Caco-2 (cell line): ENCODE measurements at regions of chr10 and their contacts with region 1.

Region 1: GRCh38 chr10:30783939-30784500 is 154.5 kb upstream of the LYZL2 start:
- DNase-seq: peak; percentile 82
- H3K4me3 ChIP-seq: no peak overlapping the region
- H3K4me3 Mint-ChIP-seq: peak overlapping the region; percentile 45
- H3K27ac Mint-ChIP-seq: no peak overlapping the region
- H3K4me1 ChIP-seq: no peaks in the 10 kb centered on the region
- H3K4me1 Mint-ChIP-seq: no peaks in the 10 kb centered on the region
- H3K27me3 ChIP-seq: peaks cover 1% of the 10 kb centered on the region; the same call in 1 of the 2 replicates
- H3K27me3 Mint-ChIP-seq: peaks cover 16% of the 10 kb centered on the region
- CTCF ChIP-seq: peak; percentile 83 to 96

Region 2: GRCh38 chr10:30309401-30309800 is 474.6 kb before region 1 on chr10:
- CTCF ChIA-PET with region 1: no interaction called
- POLR2A ChIA-PET with region 1: no interaction called
- intact Hi-C with region 1: no loop called
- DNase-seq: no peak
- H3K4me3 ChIP-seq: no peak overlapping the region
- H3K4me3 Mint-ChIP-seq: no peak overlapping the region
- H3K27ac Mint-ChIP-seq: no peak overlapping the region
- H3K4me1 ChIP-seq: no peaks in the 10 kb centered on the region
- H3K4me1 Mint-ChIP-seq: no peaks in the 10 kb centered on the region
- H3K27me3 ChIP-seq: no peaks in the 10 kb centered on the region
- H3K27me3 Mint-ChIP-seq: no peaks in the 10 kb centered on the region
- CTCF ChIP-seq: no peak

Region 3: DNA sequence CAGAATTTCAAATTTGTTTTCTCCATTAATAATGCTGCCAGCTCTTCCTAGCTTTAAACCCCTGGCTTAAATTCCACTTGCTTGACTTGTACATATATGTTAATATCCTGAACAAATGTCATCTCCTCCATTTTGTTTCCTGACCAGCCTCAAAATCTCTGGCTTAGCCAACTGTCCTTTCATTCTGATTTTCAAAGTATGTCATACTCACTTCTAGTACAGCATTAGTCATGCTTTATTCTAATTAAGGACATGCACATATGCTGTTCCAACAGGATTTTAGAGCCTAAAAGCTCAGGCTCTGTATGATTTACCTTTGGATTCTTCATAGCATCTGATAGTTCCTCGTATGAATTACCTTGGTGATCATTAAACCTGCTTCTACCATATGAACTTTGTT is 89.4 kb after region 1 on chr10:
- CTCF ChIA-PET with region 1: no interaction called
- POLR2A ChIA-PET with region 1: no interaction called
- intact Hi-C with region 1: no loop called
- DNase-seq: no peak
- H3K4me3 ChIP-seq: no peak overlapping the region
- H3K4me3 Mint-ChIP-seq: no peak overlapping the region
- H3K27ac Mint-ChIP-seq: no peak overlapping the region
- H3K4me1 ChIP-seq: no peaks in the 10 kb centered on the region
- H3K4me1 Mint-ChIP-seq: no peaks in the 10 kb centered on the region
- H3K27me3 ChIP-seq: no peaks in the 10 kb centered on the region
- H3K27me3 Mint-ChIP-seq: no peaks in the 10 kb centered on the region
- CTCF ChIP-seq: no peak

Region 4: DNA sequence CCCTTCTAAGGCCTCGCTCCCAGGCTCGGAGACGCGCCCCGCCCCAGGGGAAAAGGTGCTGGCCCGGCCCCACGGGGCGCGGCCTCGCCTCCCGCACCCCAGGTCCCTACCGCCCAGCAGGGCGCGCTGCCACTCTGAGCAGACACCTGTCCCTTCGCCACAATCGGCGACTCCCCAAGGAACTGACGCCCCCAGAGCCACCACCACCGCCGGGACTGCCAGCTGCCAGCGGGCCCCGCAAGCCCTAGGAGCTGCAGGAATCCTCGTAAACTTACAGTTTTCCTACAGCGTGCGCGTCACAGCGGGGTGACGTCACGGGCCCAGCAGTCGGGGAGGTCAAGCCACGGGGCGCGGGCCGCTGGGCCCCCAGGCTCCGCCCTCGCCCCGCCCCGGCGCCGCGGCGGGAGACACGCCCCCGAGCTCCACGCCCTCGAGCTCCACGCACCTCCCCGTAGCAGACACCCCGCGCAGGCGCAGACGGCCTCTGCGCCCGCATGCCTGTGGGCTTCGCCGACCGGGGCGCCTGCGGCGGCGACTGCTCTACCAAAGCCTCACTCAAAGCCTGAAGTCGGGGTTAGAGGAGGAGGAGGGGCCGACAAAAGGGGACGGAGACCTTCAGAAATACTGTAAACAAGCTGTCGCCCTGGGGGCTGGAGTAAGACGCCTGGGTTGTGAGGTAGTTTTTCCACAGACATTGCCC is 247.7 kb after region 1 on chr10 and contains the start of gene ZNF438:
- CTCF ChIA-PET with region 1: interaction called, 3 read pairs
- POLR2A ChIA-PET with region 1: no interaction called
- intact Hi-C with region 1: loop called (anchors 10 kb)
- DNase-seq: peak; percentile 95 to 98
- H3K4me3 ChIP-seq: peak within 1 kb of the TSS; percentile 68
- H3K4me3 Mint-ChIP-seq: peak within 1 kb of the TSS; percentile 88
- H3K27ac Mint-ChIP-seq: peak within 1 kb of the TSS; percentile 95
- H3K4me1 ChIP-seq: peaks cover 6% of the 10 kb centered on the region; the same call in 1 of the 2 replicates
- H3K4me1 Mint-ChIP-seq: no peaks in the 10 kb centered on the region
- H3K27me3 ChIP-seq: no peaks in the 10 kb centered on the region
- H3K27me3 Mint-ChIP-seq: peaks cover 12% of the 10 kb centered on the region
- CTCF ChIP-seq: peak in 1 of 2 experiments; percentile 84
- total RNA-seq, gene ZNF438: 0.58 and 1.00 TPM in 2 replicates

Region 5: GRCh38 chr10:31467796-31468535 is 683.9 kb after region 1 on chr10:
- CTCF ChIA-PET with region 1: interaction called, 3 read pairs
- POLR2A ChIA-PET with region 1: no interaction called
- intact Hi-C with region 1: loop called (anchors 5 kb)
- DNase-seq: peak; percentile 47 to 61
- H3K4me3 ChIP-seq: no peak overlapping the region
- H3K4me3 Mint-ChIP-seq: no peak overlapping the region
- H3K27ac Mint-ChIP-seq: no peak overlapping the region
- H3K4me1 ChIP-seq: no peaks in the 10 kb centered on the region
- H3K4me1 Mint-ChIP-seq: no peaks in the 10 kb centered on the region
- H3K27me3 ChIP-seq: no peaks in the 10 kb centered on the region
- H3K27me3 Mint-ChIP-seq: no peaks in the 10 kb centered on the region
- CTCF ChIP-seq: peak; percentile 67 to 72

Region 6: GRCh38 chr10:31770307-31770902 is 986.4 kb after region 1 on chr10:
- CTCF ChIA-PET with region 1: no interaction called
- POLR2A ChIA-PET with region 1: no interaction called
- intact Hi-C with region 1: loop called (anchors 1 kb)
- DNase-seq: peak in 1 of 2 experiments; percentile 68
- H3K4me3 ChIP-seq: no peak overlapping the region
- H3K4me3 Mint-ChIP-seq: no peak overlapping the region
- H3K27ac Mint-ChIP-seq: no peak overlapping the region
- H3K4me1 ChIP-seq: no peaks in the 10 kb centered on the region
- H3K4me1 Mint-ChIP-seq: no peaks in the 10 kb centered on the region
- H3K27me3 ChIP-seq: no peaks in the 10 kb centered on the region
- H3K27me3 Mint-ChIP-seq: no peaks in the 10 kb centered on the region
- CTCF ChIP-seq: peak; percentile 79 to 94